ENCODE measurements at regions of chr10 and their contacts with region 1.

Region 1: DNA sequence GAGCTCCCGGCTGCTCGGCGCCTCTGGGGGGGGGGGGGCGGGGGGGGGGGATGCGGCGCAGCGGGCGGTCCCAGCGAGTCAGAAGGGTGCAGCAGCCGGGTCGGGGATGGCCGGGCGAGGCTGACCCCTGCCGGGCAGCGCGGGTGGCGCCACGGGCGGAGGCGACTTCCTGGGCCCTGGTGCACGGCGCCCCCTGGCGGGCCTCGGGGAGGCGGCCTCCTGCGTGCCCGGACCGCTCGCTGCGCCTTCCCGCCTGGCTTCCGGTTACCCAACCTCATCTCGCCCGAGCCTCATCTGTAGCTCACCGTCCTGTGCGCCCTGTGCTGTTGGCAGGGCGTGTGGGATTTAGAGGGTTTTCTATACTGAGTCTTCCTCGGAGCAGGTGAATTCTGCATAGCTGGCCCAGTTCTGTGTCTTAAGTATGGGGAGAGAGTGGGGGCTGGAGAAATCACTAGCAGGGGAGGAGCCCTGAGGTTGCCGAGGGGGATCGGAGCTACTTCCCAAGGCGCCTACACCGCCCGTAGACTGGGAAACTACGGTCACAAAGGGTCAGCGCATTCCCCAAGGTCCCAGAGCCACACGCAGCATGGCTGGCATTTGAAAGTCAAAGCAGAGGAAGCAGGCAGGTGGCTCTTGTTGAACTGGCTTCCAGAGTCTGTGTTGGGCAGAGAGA is 28.3 kb upstream of the WDFY4 start:
- DNase-seq: peak; percentile 88

Region 2: DNA sequence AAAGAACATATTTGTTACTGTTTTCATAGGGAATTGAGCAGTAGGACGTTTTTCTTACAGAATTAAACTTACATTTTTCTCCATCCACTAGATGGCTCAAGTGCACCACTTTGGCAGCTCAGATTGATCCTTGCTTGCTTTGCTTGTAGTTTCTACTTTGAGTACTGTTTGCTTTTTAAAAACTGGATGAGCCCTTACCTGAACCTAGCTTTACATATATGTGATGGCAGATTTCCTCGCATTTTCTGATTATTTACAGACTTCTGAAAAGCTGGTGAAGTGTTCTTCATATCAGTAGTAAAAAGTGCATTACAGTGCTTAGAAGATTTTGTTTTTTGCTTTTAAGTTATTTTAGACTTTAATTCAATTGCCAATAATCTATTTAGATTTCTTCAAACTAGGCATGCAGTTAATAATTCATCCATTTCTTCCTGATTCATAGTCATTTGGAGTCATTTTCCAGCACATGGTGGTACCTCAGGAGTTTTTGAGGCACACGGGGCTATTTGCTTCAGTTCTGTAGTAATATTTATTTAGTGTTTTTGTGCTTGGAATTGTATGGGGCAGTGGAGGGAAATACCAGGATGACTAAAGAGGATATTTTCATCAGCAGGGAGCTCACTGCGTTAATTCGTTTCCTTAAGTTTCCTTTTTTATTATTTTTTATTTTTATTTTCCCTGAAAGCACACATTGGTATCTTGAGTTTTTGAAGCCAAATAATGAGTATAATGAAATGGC is 292.6 kb before region 1 on chr10:
- CTCF ChIA-PET with region 1: interaction called, 28 read pairs
- POLR2A ChIA-PET with region 1: interaction called, 3 read pairs
- DNase-seq: peak; percentile 39

Region 3: DNA sequence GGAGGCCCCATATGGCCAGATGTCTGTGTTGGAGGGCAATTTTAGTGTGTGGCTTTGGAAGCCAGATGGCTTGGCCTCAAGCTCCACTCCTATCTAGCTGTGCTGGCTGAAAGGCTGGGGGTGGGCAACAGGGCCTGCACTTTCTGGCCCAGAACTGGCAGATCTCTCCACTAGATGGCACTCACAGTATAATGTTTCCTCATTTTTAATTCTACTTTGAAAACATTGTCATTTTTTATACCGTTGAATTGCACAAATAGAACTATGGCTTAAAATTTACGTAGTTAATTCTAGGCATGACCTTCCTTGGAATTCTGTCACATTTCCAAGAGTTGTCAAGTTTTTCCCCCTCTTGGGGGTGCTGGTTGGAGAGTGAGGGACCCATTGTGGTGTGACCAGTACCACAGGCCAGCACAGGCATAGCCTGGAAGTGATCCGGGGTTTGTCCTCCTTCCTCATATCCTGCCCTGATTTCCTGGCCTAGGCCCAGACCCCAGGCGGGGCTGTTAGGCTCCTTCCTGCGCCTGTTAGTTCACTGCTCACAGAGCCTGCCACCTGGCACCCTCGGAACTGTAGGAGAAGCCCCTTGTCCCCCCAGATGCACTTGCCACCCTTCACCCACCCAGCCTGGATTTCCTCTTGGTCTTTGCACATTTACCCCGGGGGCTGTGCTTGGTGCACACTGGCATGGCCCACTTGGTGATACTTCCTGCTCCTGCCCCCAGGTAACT is 104.4 kb before region 1 on chr10:
- CTCF ChIA-PET with region 1: interaction called, 29 read pairs
- POLR2A ChIA-PET with region 1: interaction called, 3 read pairs
- DNase-seq: peak; percentile 54

Region 4: DNA sequence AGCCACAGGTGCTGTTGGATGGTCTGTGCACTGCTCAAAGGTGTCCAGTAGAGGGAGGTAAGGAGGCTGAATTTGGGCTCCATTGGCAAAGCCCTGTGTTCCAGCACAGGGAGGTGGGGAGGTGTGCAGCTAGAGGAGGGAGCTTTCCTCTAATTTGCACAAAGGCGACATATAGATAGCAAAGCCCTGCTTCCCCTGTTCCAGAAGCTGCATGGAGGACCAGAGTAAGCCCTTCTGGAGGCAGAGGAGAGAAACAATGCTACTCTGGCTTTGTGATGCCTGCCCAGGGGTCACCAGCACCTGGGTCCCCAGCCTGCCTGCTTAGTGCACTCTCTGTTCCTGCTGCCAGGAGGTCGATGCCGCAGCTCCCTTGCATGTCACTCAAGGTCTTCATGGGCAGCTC is 48.1 kb before region 1 on chr10:
- CTCF ChIA-PET with region 1: interaction called, 14 read pairs
- POLR2A ChIA-PET with region 1: no interaction called
- DNase-seq: peak; percentile 74